Body of pancreas (tissue), 4 donors: ENCODE measurements at regions of chr11 and their contacts with region 1.

Region 1: GRCh38 chr11:73625696-73626318 is 20.6 kb upstream of the PLEKHB1 start:
- DNase-seq: peak; percentile 80 to 83 (median 82)
- ATAC-seq: peak; percentile 93
- H3K4me3 ChIP-seq: no peak overlapping the region
- H3K27ac ChIP-seq: no peak overlapping the region
- H3K4me1 ChIP-seq: peaks cover 4% of the 10 kb centered on the region
- H3K27me3 ChIP-seq: no peaks in the 10 kb centered on the region
- CTCF ChIP-seq: peak; percentile 85 to 98 (median 90)
- POLR2A ChIP-seq: no peak

Region 2: DNA sequence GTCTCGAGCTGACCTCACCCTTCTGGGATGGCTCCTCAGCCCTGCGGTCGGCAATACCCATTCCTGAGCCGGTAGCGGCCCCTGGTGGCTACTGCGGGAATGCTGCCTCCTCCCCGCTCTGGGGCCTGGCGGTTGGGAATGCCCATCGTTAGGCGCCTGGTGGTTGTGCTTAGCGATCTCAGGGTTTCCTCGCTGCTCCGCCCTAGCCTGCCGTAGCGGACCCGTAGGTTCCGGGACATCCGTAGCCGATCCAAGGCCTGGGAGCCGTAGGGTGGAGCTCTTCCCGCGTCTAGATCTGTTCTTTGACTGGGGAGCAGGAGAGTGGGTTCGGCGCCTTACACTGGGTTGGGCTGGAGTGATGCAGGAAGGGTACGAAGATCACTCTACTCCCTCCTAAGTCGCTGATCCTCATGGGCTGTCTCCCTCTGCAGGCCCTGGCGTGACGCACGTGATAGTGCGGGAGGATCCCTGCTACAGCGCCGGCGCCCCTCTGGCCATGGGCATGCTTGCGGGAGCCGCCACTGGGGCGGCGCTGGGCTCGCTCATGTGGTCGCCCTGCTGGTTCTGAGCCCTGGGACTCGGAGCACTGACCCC is 35.3 kb after region 1 on chr11:
- intact Hi-C with region 1: loop called (anchors 5 kb)
- DNase-seq: peak; percentile 86 to 88 (median 87)
- ATAC-seq: peak; percentile 93
- H3K4me3 ChIP-seq: no peak overlapping the region
- H3K27ac ChIP-seq: no peak overlapping the region
- H3K4me1 ChIP-seq: peaks cover 7% of the 10 kb centered on the region
- H3K27me3 ChIP-seq: no peaks in the 10 kb centered on the region
- CTCF ChIP-seq: peak; percentile 77 to 98 (median 94)
- POLR2A ChIP-seq: no peak